ENCODE measurements at regions of chr9 and their contacts with region 1.

Region 1: GRCh38 chr9:35814841-35815543 is at the start of gene HINT2:
- DNase-seq: peak; percentile 98 to 99
- H3K4me3 ChIP-seq: peak within 1 kb of the TSS; percentile 79
- H3K4me3 Mint-ChIP-seq: peak within 1 kb of the TSS; percentile 93
- H3K27ac Mint-ChIP-seq: peak within 1 kb of the TSS; percentile 93
- H3K4me1 ChIP-seq: peaks cover 20% of the 10 kb centered on the region
- H3K4me1 Mint-ChIP-seq: peaks cover 14% of the 10 kb centered on the region
- H3K27me3 ChIP-seq: no peaks in the 10 kb centered on the region
- H3K27me3 Mint-ChIP-seq: no peaks in the 10 kb centered on the region
- CTCF ChIP-seq: no peak
- total RNA-seq, gene HINT2: 88.0 and 110 TPM in 2 replicates

Region 2: GRCh38 chr9:35748858-35749514 is 66.0 kb before region 1 on chr9 and contains the starts of genes GBA2 and RGP1:
- CTCF ChIA-PET with region 1: interaction called, 8 read pairs
- POLR2A ChIA-PET with region 1: interaction called, 4 read pairs
- intact Hi-C with region 1: loop called (anchors 5 kb)
- DNase-seq: peak; percentile 89 to 90
- H3K4me3 ChIP-seq: peak within 1 kb of the TSS; percentile 89
- H3K4me3 Mint-ChIP-seq: peak within 1 kb of the TSS; percentile 86
- H3K27ac Mint-ChIP-seq: peak within 1 kb of the TSS; percentile 85
- H3K4me1 ChIP-seq: peaks cover 23% of the 10 kb centered on the region
- H3K4me1 Mint-ChIP-seq: peaks cover 22% of the 10 kb centered on the region
- H3K27me3 ChIP-seq: no peaks in the 10 kb centered on the region
- H3K27me3 Mint-ChIP-seq: no peaks in the 10 kb centered on the region
- CTCF ChIP-seq: no peak
- total RNA-seq, gene GBA2: 108 and 111 TPM in 2 replicates
- total RNA-seq, gene RGP1: 25.0 and 27.1 TPM in 2 replicates

Region 3: GRCh38 chr9:35790385-35791296 is 24.4 kb before region 1 on chr9:
- CTCF ChIA-PET with region 1: interaction called, 77 read pairs
- POLR2A ChIA-PET with region 1: interaction called, 5 read pairs
- intact Hi-C with region 1: loop called (anchors 1 kb)
- DNase-seq: peak; percentile 75 to 77
- H3K4me3 ChIP-seq: no peak overlapping the region
- H3K4me3 Mint-ChIP-seq: no peak overlapping the region
- H3K27ac Mint-ChIP-seq: no peak overlapping the region
- H3K4me1 ChIP-seq: peaks cover 8% of the 10 kb centered on the region; the same call in 1 of the 2 replicates
- H3K4me1 Mint-ChIP-seq: peaks cover 4% of the 10 kb centered on the region
- H3K27me3 ChIP-seq: no peaks in the 10 kb centered on the region
- H3K27me3 Mint-ChIP-seq: no peaks in the 10 kb centered on the region
- CTCF ChIP-seq: peak; percentile 80 to 81

Region 4: DNA sequence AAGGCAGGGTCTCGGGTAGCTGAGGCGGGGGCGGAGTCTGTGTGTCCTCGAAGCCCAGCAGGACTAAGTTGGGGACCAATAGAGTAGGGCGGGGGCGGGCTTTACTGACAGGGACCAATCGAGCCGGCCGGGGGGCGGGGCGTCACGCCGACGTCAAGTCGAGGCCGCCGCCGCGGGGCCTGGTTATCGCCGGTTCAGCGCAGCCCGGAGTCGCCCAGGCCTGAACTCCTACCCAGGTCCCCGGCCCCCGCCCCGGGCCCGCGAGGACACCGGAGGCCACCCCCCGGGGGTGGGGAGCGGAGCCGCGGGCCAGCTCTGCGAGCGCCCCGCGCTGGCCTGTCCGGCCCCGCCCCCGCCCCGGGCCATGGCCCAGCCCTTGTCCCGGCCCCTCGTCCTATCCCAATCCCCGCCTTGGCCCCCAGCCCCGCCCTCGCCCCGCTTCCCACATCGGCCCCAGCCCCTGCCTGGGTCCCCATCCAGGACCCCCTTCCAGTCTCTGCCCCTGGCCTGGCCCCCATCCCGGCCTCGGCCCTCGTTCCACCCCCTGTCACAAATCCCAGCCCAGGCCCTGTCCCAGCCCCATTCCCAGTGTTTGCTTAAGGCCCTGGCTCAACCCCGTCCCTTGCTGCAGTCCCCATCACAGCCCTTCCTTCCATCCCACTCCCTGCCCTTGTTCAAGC is 14.2 kb after region 1 on chr9 and contains the start of gene TMEM8B:
- CTCF ChIA-PET with region 1: interaction called, 10 read pairs
- POLR2A ChIA-PET with region 1: interaction called, 4 read pairs
- intact Hi-C with region 1: loop called (anchors 1 kb)
- DNase-seq: peak; percentile 94 to 95
- H3K4me3 ChIP-seq: peak within 1 kb of the TSS; percentile 48
- H3K4me3 Mint-ChIP-seq: peak within 1 kb of the TSS; percentile 88
- H3K27ac Mint-ChIP-seq: peak within 1 kb of the TSS; percentile 88
- H3K4me1 ChIP-seq: peaks cover 4% of the 10 kb centered on the region; the same call in 1 of the 2 replicates
- H3K4me1 Mint-ChIP-seq: peaks cover 8% of the 10 kb centered on the region
- H3K27me3 ChIP-seq: no peaks in the 10 kb centered on the region
- H3K27me3 Mint-ChIP-seq: no peaks in the 10 kb centered on the region
- CTCF ChIP-seq: no peak
- total RNA-seq, gene TMEM8B: 4.8 and 4.9 TPM in 2 replicates

Measured in Caco-2 (cell line).